ENCODE measurements at regions of chr22 and their contacts with region 1.

Region 1: GRCh38 chr22:37428649-37429586 is 1.6 kb upstream of the ELFN2 start:
- DNase-seq: peak; percentile 75
- H3K4me3 Mint-ChIP-seq: no peak overlapping the region
- H3K27ac Mint-ChIP-seq: no peak overlapping the region
- H3K4me1 Mint-ChIP-seq: peaks cover 27% of the 10 kb centered on the region
- H3K27me3 Mint-ChIP-seq: peaks cover 89% of the 10 kb centered on the region

Region 2: GRCh38 chr22:37316875-37317371 is 112.0 kb before region 1 on chr22:
- CTCF ChIA-PET with region 1: interaction called, 60 read pairs
- DNase-seq: peak; percentile 81
- H3K4me3 Mint-ChIP-seq: no peak overlapping the region
- H3K27ac Mint-ChIP-seq: no peak overlapping the region
- H3K4me1 Mint-ChIP-seq: peaks cover 41% of the 10 kb centered on the region
- H3K27me3 Mint-ChIP-seq: peaks cover 51% of the 10 kb centered on the region

Region 3: GRCh38 chr22:37330200-37331033 is 98.5 kb before region 1 on chr22:
- CTCF ChIA-PET with region 1: interaction called, 15 read pairs
- DNase-seq: peak; percentile 56
- H3K4me3 Mint-ChIP-seq: no peak overlapping the region
- H3K27ac Mint-ChIP-seq: no peak overlapping the region
- H3K4me1 Mint-ChIP-seq: peaks cover 7% of the 10 kb centered on the region
- H3K27me3 Mint-ChIP-seq: peaks cover 100% of the 10 kb centered on the region

Region 4: GRCh38 chr22:37439347-37439746 is 10.4 kb after region 1 on chr22:
- CTCF ChIA-PET with region 1: interaction called, 13 read pairs
- DNase-seq: no peak
- H3K4me3 Mint-ChIP-seq: no peak overlapping the region
- H3K27ac Mint-ChIP-seq: no peak overlapping the region
- H3K4me1 Mint-ChIP-seq: peaks cover 6% of the 10 kb centered on the region
- H3K27me3 Mint-ChIP-seq: peaks cover 29% of the 10 kb centered on the region

Region 5: DNA sequence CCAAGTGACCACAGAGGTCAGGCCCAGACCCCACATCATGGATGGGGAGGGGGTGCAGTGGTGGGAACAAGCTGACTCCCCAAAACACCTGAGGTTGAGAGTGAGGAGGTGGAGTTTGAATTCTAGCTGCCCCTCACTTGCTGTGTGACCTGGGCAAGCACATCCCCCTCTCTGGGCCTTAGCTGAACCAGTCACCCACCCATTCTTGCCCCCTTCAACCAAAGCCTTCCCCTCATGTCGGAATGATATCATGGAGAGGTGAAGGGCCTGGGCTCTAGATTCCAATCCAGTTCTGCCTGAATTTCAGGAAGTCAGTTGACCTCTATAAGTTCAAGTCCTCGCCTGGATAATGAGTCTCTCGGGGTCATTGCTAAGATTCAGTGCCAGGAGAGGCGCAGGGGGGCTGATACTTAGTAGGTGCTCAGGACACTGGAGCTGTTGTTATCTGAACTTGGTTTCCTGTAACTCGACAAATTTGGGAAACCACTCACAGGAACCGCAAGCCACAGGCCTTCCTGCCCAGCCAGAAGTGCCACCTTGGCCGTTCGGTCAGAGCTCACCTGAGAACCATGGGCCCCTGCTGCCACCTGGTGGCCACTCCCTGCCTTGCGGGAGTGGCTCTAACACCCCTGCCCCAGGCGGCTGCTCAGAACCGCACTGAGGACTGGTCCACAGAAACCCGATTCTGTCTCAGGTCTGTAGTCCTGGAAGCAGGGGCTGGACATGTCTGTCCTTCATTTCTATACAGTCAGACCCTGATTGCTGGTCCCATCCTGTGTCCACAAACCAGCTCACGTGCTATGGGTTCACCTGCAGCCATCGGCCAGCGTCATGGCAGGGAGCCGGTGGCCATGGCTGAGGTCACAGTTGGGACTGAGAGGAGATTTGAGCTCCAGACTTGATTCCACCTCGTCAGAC is 138.2 kb after region 1 on chr22:
- CTCF ChIA-PET with region 1: interaction called, 12 read pairs
- DNase-seq: peak; percentile 95
- H3K4me3 Mint-ChIP-seq: peak overlapping the region; percentile 38
- H3K27ac Mint-ChIP-seq: peak overlapping the region; percentile 81
- H3K4me1 Mint-ChIP-seq: peaks cover 23% of the 10 kb centered on the region
- H3K27me3 Mint-ChIP-seq: peaks cover 100% of the 10 kb centered on the region